ENCODE measurements at regions of chr11 and their contacts with region 1.

Region 1: GRCh38 chr11:65314501-65315203 is at the start of gene CDC42EP2:
- DNase-seq: peak; percentile 95
- H3K4me3 ChIP-seq: peak within 1 kb of the TSS; percentile 87 to 100 (median 88)
- H3K27ac ChIP-seq: peak within 1 kb of the TSS; percentile 95 to 97 (median 96)
- H3K4me1 ChIP-seq: peaks cover 48 to 88% (median 86%) of the 10 kb centered on the region in 4 donors
- H3K27me3 ChIP-seq: no peaks in the 10 kb centered on the region
- CTCF ChIP-seq: peak in 1 of 3 experiments; percentile 4
- EP300 ChIP-seq: no peak
- POLR2A ChIP-seq: no peak
- total RNA-seq, gene CDC42EP2: 39.9 to 90.1 (median 54.4) TPM

Region 2: GRCh38 chr11:65290448-65291165 is 24.0 kb before region 1 on chr11:
- intact Hi-C with region 1: loop called (anchors 2 kb)
- DNase-seq: peak; percentile 99
- H3K4me3 ChIP-seq: peak overlapping the region; percentile 18 to 53 (median 41)
- H3K27ac ChIP-seq: peak overlapping the region; percentile 92 to 97 (median 94)
- H3K4me1 ChIP-seq: peaks cover 55 to 74% (median 73%) of the 10 kb centered on the region in 4 donors
- H3K27me3 ChIP-seq: no peaks in the 10 kb centered on the region
- CTCF ChIP-seq: no peak
- EP300 ChIP-seq: no peak
- POLR2A ChIP-seq: no peak

Region 3: DNA sequence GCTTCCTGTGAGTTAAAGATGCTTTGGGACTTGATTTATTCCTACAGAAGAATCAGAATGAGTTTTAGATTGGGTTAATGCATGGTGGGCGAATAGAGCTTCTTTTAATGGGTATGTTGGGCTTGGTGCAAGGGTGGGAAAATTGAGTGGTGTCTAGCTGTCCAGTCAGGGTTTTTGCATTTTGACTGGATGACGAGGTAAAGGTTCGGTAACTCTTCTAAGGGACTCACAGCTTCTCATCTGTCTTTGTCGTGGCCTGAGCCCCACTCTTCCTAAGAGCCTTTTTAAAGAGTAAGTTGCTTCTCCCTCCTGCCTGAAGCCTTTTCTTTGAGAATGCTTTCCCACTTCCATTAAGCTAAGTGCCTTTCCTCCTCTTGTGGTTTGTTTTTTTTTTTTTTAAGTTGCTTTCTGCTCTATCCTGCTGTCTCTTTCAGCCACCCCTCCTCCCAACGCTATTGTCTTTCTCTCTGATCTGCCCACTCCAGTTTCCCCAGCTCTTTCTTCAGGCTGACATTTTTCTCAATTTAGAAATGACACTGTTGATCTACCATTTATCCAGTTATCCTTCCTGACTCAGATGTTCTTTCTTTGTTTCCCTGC is 20.1 kb after region 1 on chr11:
- intact Hi-C with region 1: no loop called
- DNase-seq: no peak
- H3K4me3 ChIP-seq: peak overlapping the region; percentile 76 to 88 (median 86)
- H3K27ac ChIP-seq: peak overlapping the region; percentile 82 to 94 (median 90)
- H3K4me1 ChIP-seq: peaks cover 22 to 61% (median 54%) of the 10 kb centered on the region in 4 donors
- H3K27me3 ChIP-seq: no peaks in the 10 kb centered on the region
- CTCF ChIP-seq: no peak
- EP300 ChIP-seq: no peak
- POLR2A ChIP-seq: no peak